Activated CD4-positive, alpha-beta T cell treated with anti-CD3 and anti-CD28 coated beads, Interleukin-2, amount 10 ng/mL, durations not matched to agents 24 days and 14 days (primary cell): ENCODE measurements at regions of chr6 and their contacts with region 1.

Region 1: DNA sequence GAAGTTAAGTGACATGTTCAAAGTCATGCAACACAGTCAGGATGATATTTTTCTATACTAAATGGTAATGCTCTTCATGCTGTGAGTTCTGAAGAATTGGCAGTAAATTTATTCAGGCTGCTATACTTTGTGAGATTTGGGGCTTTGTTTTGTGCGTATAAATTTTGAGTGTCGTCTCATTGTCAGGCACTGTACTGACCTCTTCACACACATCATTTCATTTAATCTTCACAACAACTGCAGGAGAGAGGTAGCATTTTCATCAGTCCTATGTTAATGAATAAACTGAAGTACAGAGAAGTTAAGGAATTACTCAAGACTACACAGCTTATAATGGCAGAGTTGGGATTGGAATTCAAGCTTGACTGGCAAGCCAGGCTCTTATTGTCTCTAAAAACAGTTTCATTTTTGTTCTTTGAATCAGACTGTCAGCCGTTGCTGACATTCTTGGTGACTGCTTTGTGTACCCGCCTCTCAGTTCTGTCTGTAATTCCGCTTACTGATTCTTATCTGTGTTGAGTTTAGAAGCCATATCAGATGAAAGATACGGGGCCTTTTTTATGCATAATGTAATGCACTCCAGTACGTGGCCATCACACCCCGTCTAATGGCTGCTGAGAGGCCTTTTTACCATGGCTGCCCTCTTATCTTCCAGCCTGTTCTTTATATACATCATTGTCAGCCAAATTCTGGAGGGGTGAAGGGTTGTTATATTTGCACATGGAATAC is 274.9 kb downstream of the UTRN start:
- DNase-seq: peak; percentile 87
- H3K4me3 Mint-ChIP-seq: peak overlapping the region; percentile 80
- H3K27ac Mint-ChIP-seq: peak overlapping the region; percentile 93
- H3K4me1 Mint-ChIP-seq: peaks cover 28% of the 10 kb centered on the region
- H3K27me3 Mint-ChIP-seq: no peaks in the 10 kb centered on the region

Region 2: DNA sequence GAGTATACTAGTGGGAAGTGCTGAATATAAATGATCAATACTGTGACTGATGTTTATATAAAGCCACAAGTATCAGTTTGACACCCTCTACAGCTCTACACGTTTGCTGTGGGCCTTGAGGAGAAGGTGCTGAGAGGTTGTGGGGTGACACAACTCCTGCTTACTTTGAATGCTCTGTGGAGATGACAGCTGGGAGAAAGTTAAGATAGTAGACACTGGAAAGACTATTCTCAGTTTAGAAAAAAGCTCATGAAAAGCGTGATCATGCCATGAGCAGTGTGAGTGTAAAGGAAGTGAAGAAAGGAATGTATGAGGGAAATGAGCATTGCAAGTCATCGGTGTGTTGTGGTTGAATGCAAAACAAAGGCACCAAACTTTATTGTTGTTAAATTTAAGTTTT is 59.1 kb before region 1 on chr6:
- intact Hi-C with region 1: no loop called
- DNase-seq: no peak
- H3K4me3 Mint-ChIP-seq: no peak overlapping the region
- H3K27ac Mint-ChIP-seq: peak overlapping the region; percentile 3
- H3K4me1 Mint-ChIP-seq: peaks cover 19% of the 10 kb centered on the region
- H3K27me3 Mint-ChIP-seq: no peaks in the 10 kb centered on the region

Region 3: DNA sequence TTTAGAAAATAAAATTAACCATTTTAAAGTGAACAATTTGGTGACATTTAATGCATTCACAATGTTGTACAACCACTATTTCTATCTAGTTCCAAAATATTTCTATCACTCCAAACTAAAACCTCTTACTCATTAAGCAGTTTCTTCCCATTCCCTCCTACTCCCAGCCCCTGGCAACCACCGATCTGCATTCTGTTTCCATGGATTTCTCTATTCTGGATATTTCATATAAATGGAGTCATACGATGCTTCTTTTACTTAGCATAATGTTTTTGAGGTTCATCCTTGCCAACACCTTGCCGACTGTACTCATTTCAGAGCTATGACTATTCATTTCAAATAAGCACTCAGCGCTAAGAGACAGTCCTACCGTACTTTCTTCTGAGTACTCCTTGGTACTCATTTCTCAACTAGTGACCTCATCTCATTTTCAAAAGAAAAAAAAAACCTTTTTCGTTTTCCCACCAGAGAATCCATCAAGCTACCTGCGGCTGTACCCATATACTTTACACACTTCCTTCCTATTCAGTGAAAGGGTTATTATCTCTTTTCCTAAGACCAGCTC is 15.7 kb before region 1 on chr6:
- intact Hi-C with region 1: loop called (anchors 2 kb)
- DNase-seq: no peak
- H3K4me3 Mint-ChIP-seq: no peak overlapping the region
- H3K27ac Mint-ChIP-seq: peak overlapping the region; percentile 78
- H3K4me1 Mint-ChIP-seq: peaks cover 9% of the 10 kb centered on the region
- H3K27me3 Mint-ChIP-seq: no peaks in the 10 kb centered on the region

Region 4: DNA sequence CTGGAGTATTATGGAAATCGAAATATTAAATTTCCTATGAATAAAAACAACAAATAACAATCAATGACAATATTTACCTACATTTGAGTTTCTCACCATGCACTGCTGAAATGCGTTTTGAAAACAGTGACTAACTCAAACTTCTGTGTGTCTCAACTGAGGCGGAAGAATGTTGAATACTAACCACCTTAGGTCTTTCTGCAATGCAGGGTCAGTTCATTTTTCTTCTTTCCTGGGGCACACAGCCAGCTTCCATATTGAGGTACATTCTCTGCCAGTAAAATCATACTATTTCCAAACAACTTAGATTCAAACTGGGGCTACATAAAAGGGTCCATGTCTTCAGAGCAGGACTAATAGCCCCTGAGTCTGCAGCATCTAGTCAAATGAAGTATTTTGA is 35.2 kb after region 1 on chr6:
- intact Hi-C with region 1: loop called (anchors 1 kb)
- DNase-seq: no peak
- H3K4me3 Mint-ChIP-seq: no peak overlapping the region
- H3K27ac Mint-ChIP-seq: no peak overlapping the region
- H3K4me1 Mint-ChIP-seq: peaks cover 18% of the 10 kb centered on the region
- H3K27me3 Mint-ChIP-seq: no peaks in the 10 kb centered on the region

Region 5: DNA sequence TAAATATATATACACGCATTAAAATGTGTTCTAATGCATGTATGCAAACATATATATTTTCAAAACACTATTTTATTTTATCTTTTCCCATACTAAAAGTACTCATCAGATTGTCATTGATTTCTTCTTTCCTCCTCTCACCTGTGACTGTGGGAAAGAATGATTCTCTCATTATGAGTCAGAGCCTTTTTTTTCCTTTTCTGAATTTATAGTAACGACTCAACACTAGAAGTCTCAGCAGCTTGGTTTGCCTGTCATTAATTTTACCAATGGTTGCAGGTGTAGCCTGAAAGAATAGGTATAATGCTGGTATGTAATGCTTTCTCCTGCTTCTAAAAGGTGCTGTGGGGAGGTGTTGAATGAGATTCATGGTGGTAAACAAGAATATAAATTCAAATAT is 53.8 kb after region 1 on chr6:
- intact Hi-C with region 1: no loop called
- DNase-seq: no peak
- H3K4me3 Mint-ChIP-seq: no peak overlapping the region
- H3K27ac Mint-ChIP-seq: no peak overlapping the region
- H3K4me1 Mint-ChIP-seq: peaks cover 15% of the 10 kb centered on the region
- H3K27me3 Mint-ChIP-seq: no peaks in the 10 kb centered on the region

Region 6: GRCh38 chr6:144659202-144660182 is 99.5 kb after region 1 on chr6:
- intact Hi-C with region 1: no loop called
- DNase-seq: peak; percentile 71
- H3K4me3 Mint-ChIP-seq: peak overlapping the region; percentile 67
- H3K27ac Mint-ChIP-seq: peak overlapping the region; percentile 88
- H3K4me1 Mint-ChIP-seq: peaks cover 24% of the 10 kb centered on the region
- H3K27me3 Mint-ChIP-seq: no peaks in the 10 kb centered on the region

Region 7: DNA sequence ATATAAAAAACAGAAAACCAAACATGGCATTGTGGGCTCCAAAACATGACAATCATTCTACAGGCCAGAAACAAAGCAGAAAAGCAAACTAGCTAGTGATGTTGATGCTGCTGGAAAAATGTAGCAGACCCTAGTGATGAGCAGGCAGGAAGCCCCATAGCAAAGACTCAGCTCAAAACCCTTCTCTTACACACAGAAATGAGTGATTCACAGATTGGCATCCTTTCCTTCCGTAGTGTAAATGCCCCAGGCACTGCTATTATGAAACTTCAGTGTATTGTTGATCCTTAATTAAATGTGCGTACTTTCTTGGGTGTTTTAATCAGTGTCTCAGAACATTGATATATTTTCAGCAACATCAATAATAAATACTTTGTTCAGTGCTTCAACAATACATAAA is 150.2 kb after region 1 on chr6:
- intact Hi-C with region 1: no loop called
- DNase-seq: no peak
- H3K4me3 Mint-ChIP-seq: no peak overlapping the region
- H3K27ac Mint-ChIP-seq: no peak overlapping the region
- H3K4me1 Mint-ChIP-seq: peaks cover 2% of the 10 kb centered on the region
- H3K27me3 Mint-ChIP-seq: no peaks in the 10 kb centered on the region